ENCODE measurements at regions of chr19 and their contacts with region 1.

Region 1: DNA sequence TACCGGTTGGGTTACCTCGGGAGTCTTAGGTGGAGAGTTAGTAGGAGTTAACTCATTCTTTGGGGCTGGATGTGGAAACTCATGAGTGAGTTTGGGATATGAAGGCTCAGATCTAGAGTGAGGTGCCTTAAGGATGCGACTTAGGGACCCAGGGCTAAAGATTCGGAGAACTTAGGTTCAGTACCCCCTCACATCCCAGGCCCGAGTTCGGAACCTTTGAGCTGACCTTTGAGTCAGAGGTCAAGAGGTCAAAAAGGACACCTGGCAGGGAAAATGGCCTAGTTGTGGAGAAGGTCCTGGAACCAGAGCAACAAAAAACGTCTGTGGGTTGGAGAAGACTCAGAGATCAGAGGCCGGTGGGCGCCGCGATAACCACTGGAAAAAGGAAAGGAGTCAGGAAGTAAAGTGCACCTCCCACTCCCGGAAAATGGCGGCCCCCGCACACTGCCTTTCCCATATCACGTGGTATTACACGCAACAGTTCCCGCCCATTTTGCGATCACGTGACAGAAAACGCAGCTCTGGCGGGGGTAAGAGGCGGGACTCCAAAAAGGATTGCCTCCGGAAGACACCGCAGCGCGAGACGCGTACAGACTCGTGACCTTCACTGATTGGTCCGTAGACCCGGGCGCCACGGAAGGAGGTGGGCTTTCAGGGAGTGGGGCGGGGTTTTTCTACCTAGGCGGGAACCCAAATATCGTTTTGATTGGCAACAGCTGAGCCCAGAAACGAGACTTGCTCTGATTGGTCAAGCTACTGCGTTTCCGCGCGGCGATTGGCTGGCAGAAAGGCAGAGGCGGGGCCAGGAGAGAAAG is at the start of gene ACTMAP:
- DNase-seq: peak; percentile 100
- H3K4me3 ChIP-seq: peak within 1 kb of the TSS; percentile 66 to 71 (median 67)
- H3K27ac ChIP-seq: peak within 1 kb of the TSS; percentile 94
- H3K4me1 ChIP-seq: peaks cover 26% of the 10 kb centered on the region
- H3K27me3 ChIP-seq: no peaks in the 10 kb centered on the region
- CTCF ChIP-seq: no peak
- total RNA-seq, gene ACTMAP: 1.0 to 15.2 TPM

Region 2: GRCh38 chr19:40674291-40674690 is 76.0 kb before region 1 on chr19:
- CTCF ChIA-PET with region 1: no interaction called
- dilution Hi-C with region 1: loop called (anchors 5 kb)
- in situ Hi-C with region 1: no loop called
- intact Hi-C with region 1: no loop called
- DNase-seq: no peak
- H3K4me3 ChIP-seq: no peak overlapping the region
- H3K27ac ChIP-seq: no peak overlapping the region
- H3K4me1 ChIP-seq: no peaks in the 10 kb centered on the region
- H3K27me3 ChIP-seq: no peaks in the 10 kb centered on the region
- CTCF ChIP-seq: no peak

Region 3: GRCh38 chr19:40716655-40717324 is 33.5 kb before region 1 on chr19 and contains the starts of genes COQ8B and ITPKC:
- CTCF ChIA-PET with region 1: interaction called, 7 read pairs
- dilution Hi-C with region 1: no loop called
- in situ Hi-C with region 1: no loop called
- intact Hi-C with region 1: loop called (anchors 1 kb)
- DNase-seq: peak; percentile 99
- H3K4me3 ChIP-seq: peak within 1 kb of the TSS; percentile 56 to 90 (median 89)
- H3K27ac ChIP-seq: peak within 1 kb of the TSS; percentile 100
- H3K4me1 ChIP-seq: peaks cover 31% of the 10 kb centered on the region
- H3K27me3 ChIP-seq: no peaks in the 10 kb centered on the region
- CTCF ChIP-seq: no peak
- total RNA-seq, gene COQ8B: 23.8 to 32.0 TPM
- total RNA-seq, gene ITPKC: 38.7 to 40.0 TPM

Region 4: DNA sequence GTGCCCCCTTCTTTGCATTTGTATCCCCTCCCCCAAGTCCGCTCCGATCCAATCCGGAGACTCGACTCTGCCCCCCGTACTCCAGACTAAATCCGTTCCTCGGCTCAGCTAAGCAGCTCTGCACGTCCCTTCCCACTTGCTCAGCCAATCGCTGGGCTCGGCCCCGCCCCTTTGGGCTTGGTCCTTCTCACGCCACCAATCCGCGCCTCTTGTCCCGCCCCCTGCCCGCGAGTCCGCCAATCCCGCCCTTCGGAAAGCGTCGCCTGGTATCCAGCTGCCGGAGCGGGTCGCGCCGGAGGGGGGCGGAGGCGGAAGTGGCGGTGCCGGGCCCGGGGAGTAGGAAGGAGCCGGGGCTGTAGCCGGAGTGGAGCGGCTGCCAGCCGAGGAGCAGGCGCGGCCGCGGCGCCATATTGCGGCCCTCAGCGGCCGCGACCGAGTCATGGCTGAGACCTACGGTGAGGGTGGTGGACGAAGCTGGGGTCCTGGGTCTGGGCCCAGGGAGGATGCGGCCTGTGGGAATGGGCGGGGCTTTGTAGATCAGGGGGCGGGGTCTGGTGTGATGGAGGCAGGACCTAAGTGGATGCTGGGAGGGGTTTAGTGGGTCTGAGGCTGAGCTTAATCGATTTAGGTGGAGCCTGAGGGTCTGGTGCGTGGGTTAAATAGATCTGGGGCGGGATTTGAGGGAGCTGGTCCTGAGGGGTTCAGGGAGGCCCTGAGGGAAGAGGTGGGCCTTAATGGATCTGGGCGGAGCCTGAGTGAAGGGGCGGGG is 27.9 kb after region 1 on chr19 and contains the start of gene RAB4B:
- CTCF ChIA-PET with region 1: no interaction called
- dilution Hi-C with region 1: no loop called
- in situ Hi-C with region 1: no loop called
- intact Hi-C with region 1: loop called (anchors 1 kb)
- DNase-seq: peak; percentile 99
- H3K4me3 ChIP-seq: peak within 1 kb of the TSS; percentile 57 to 89 (median 60)
- H3K27ac ChIP-seq: peak within 1 kb of the TSS; percentile 99
- H3K4me1 ChIP-seq: peaks cover 27% of the 10 kb centered on the region
- H3K27me3 ChIP-seq: no peaks in the 10 kb centered on the region
- CTCF ChIP-seq: no peak
- total RNA-seq, gene RAB4B: 9.0 to 23.5 TPM

Region 5: DNA sequence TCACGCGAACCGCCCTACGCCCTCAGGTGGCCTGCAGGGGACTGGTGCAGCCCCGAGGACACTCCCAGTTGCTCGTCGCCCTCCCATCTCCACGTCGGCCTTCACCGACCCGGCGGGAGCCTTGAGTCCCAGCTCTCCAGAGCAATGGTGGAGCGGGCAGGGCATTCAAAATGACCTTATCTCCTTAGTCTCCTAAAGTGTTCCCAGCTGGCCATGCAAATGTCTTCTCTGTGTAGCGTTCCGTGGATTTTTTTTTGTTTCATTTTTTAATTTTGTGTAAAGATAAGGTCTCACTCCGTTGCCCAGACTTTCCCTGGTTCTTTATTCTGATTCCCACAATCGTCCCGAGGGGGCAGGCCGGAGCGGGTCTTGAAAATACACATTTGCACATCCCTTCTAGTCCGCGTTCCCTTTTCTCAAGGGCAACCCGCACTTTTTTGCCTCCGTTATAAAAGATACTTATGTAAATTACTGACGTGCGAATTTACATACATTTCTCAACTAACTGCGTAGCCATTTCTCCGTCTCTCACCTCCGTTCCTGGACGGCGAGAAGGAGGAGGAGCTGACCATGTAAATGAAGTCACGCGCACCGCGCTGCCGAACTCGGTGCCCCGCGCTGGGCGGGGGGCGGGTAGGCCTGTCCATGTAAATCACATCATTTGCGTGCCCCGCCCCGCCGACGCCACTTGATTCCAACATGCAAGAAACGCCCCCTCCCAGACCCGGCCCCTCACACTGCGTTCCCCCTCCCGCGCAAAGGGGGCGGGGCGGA is 48.1 kb after region 1 on chr19:
- CTCF ChIA-PET with region 1: no interaction called
- dilution Hi-C with region 1: no loop called
- in situ Hi-C with region 1: no loop called
- intact Hi-C with region 1: loop called (anchors 2 kb)
- DNase-seq: peak; percentile 99
- H3K4me3 ChIP-seq: peak overlapping the region; percentile 50 to 57 (median 54)
- H3K27ac ChIP-seq: peak overlapping the region; percentile 82
- H3K4me1 ChIP-seq: peaks cover 42% of the 10 kb centered on the region
- H3K27me3 ChIP-seq: no peaks in the 10 kb centered on the region
- CTCF ChIP-seq: peak; percentile 23 to 38

Region 6: DNA sequence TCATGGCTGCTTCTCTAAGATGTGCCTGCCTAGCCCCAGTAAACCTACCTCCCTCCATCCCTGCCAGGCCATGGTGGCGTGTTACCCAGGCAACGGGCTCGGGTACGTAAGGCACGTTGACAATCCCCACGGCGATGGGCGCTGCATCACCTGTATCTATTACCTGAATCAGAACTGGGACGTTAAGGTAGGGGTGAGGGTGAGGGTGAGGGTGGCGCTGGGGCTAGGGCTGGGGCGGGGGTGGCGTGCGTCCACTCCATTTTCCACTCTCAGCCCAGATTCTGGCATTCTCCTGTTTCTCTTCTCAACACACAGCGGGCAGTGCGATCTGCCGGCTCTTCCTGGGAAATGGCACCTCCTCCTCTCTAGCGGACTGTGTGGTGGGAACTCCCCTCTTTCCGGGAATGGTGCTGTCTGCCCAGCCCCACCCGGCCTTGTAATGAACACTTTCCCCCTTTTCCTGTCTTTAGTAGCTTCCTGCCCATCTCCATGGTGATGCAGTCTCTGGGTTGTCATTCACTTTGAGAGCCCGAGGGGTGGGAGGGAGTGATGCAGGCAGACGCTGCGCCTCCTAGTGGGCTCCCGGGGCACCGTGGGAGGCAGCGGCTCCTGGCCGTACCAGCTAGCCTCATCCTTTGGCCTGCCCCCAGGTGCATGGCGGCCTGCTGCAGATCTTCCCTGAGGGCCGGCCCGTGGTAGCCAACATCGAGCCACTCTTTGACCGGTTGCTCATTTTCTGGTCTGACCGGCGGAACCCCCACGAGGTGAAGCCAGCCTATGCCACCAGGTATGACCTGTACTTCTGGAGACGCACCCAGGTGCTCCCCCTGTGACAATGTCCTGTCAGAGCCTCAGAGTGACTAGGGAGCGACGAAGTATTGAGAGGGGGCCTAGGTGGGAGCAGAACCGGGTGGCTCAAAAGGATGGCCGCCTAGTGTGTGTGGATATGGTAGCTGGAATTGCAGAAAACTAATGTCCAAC is 56.5 kb after region 1 on chr19:
- CTCF ChIA-PET with region 1: interaction called, 7 read pairs
- dilution Hi-C with region 1: loop called (anchors 5 kb)
- in situ Hi-C with region 1: no loop called
- intact Hi-C with region 1: loop called (anchors 2 kb)
- DNase-seq: peak; percentile 63
- H3K4me3 ChIP-seq: no peak overlapping the region
- H3K27ac ChIP-seq: peak overlapping the region; percentile 23
- H3K4me1 ChIP-seq: peaks cover 48% of the 10 kb centered on the region
- H3K27me3 ChIP-seq: no peaks in the 10 kb centered on the region
- CTCF ChIP-seq: peak; percentile 79 to 83

Region 7: GRCh38 chr19:41016488-41017071 is 266.3 kb after region 1 on chr19:
- CTCF ChIA-PET with region 1: no interaction called
- dilution Hi-C with region 1: loop called (anchors 10 kb)
- in situ Hi-C with region 1: no loop called
- intact Hi-C with region 1: no loop called
- DNase-seq: no peak
- H3K4me3 ChIP-seq: no peak overlapping the region
- H3K27ac ChIP-seq: no peak overlapping the region
- H3K4me1 ChIP-seq: peaks cover 3% of the 10 kb centered on the region
- H3K27me3 ChIP-seq: no peaks in the 10 kb centered on the region
- CTCF ChIP-seq: no peak

Measured in mammary epithelial cell (primary cell).